IMR-90 (cell line): ENCODE measurements at regions of chr3 and their contacts with region 1.

Region 1: DNA sequence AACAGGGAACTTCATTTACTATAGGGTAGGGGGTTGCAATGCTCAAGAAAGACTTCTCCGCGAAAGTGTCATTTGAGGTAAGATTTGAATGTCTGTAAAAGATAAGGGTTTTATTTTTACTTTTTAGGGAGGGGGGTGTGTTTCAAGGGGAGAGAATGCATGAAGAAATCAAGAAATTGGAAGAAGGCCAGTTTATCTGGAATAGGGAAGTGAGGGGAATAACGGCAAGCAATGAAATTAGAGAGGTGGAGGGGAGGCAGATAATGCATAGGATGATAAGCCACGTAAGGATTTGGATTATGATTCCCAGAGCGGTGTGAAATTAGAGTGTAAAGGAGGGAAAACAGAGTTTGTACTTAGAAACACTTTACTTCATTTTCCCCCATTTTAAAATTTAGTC is 63.0 kb upstream of the MB21D2 start:
- DNase-seq: no peak
- ATAC-seq: no peak
- H3K4me3 ChIP-seq: no peak overlapping the region
- H3K27ac ChIP-seq: no peak overlapping the region
- H3K4me1 ChIP-seq: no peaks in the 10 kb centered on the region
- H3K27me3 ChIP-seq: no peaks in the 10 kb centered on the region
- CTCF ChIP-seq: no peak
- POLR2A ChIP-seq: no peak
- RAD21 ChIP-seq: no peak

Region 2: DNA sequence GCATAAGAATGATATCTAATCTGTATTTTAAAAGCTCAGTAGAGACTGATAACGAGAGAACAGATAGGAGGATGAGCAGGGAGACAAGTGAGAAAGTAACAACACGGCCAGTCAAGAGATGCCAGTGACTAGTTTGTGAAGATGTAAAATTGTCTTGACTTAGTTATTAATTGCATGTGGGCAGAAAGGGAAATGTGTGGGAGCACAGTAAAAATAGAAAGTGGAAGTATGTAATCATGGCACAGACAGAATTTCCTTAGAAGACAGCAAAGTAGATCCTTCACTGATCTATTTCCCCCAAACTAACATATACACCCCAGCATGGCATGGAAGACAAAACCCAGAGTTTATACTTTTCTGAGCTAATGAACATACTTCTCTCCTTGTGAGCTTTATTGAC is 597.8 kb before region 1 on chr3:
- CTCF ChIA-PET with region 1: no interaction called
- POLR2A ChIA-PET with region 1: no interaction called
- dilution Hi-C with region 1: no loop called
- in situ Hi-C with region 1: no loop called
- intact Hi-C with region 1: loop called (anchors 10 kb)
- DNase-seq: no peak
- ATAC-seq: no peak
- H3K4me3 ChIP-seq: no peak overlapping the region
- H3K27ac ChIP-seq: no peak overlapping the region
- H3K4me1 ChIP-seq: no peaks in the 10 kb centered on the region
- H3K27me3 ChIP-seq: no peaks in the 10 kb centered on the region
- CTCF ChIP-seq: no peak
- POLR2A ChIP-seq: no peak
- RAD21 ChIP-seq: no peak